CD8-positive, alpha-beta T cell (primary cell): ENCODE measurements at regions of chr3 and their contacts with region 1.

Region 1: GRCh38 chr3:177359593-177360357 is 162.5 kb upstream of the TBL1XR1 start:
- DNase-seq: peak; percentile 94 to 99 (median 96)
- ATAC-seq: peak; percentile 84
- H3K4me3 ChIP-seq: peak overlapping the region; percentile 59 to 93
- H3K4me3 Mint-ChIP-seq: peak overlapping the region; percentile 92
- H3K27ac ChIP-seq: peak overlapping the region; percentile 89 to 99
- H3K27ac Mint-ChIP-seq: peak overlapping the region; percentile 99
- H3K4me1 ChIP-seq: peaks cover 33% of the 10 kb centered on the region
- H3K4me1 Mint-ChIP-seq: peaks cover 49% of the 10 kb centered on the region
- H3K27me3 ChIP-seq: no peaks in the 10 kb centered on the region
- H3K27me3 Mint-ChIP-seq: no peaks in the 10 kb centered on the region
- CTCF ChIP-seq: no peak

Region 2: DNA sequence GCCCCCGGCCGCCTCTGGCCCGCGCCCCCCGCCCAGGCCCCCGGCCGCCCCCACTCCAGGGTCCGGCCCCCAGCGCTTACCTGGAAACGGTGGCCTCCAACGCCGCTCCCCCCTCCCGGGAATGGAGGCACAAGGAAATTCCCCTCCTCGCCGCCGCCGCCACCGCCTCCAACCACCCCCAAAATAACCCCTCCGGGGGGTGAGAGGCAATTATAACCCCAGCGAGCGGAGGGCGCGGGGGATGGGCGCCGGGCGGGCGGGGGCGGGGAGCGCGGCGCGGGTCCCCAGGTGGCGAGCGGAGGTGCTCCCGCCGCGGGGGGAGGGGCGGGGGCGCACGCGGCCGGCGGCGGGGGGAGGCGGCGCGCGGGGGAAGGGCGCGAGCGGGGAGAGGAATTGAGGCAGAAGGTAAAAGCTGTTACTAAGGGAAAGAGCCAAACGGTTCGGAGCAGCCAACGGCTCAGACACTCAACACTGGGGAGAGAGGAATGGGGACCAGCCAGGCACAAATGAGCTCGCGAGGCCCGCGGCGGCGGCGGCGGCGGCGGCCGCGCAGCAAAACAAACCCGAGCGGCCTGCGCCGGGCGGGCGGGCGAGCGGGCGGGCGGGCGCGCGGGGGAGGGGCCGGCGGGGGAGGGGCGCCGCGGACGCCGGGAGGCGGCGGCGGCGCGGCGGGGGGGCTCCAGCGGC is 162.6 kb before region 1 on chr3 and contains the start of gene TBL1XR1:
- CTCF ChIA-PET with region 1: interaction called, 65 read pairs
- POLR2A ChIA-PET with region 1: interaction called, 199 read pairs
- intact Hi-C with region 1: loop called (anchors 1 kb)
- DNase-seq: peak; percentile 78 to 95 (median 86)
- ATAC-seq: peak; percentile 48
- H3K4me3 ChIP-seq: peak within 1 kb of the TSS; percentile 86 to 93
- H3K4me3 Mint-ChIP-seq: peak within 1 kb of the TSS; percentile 99
- H3K27ac ChIP-seq: peak within 1 kb of the TSS; percentile 81 to 85
- H3K27ac Mint-ChIP-seq: peak within 1 kb of the TSS; percentile 99
- H3K4me1 ChIP-seq: peaks cover 56% of the 10 kb centered on the region
- H3K4me1 Mint-ChIP-seq: peaks cover 65% of the 10 kb centered on the region
- H3K27me3 ChIP-seq: no peaks in the 10 kb centered on the region
- H3K27me3 Mint-ChIP-seq: no peaks in the 10 kb centered on the region
- CTCF ChIP-seq: no peak
- total RNA-seq, gene TBL1XR1: 64.8 to 68.4 TPM

Region 3: GRCh38 chr3:177236704-177237103 is 123.1 kb before region 1 on chr3:
- CTCF ChIA-PET with region 1: no interaction called
- POLR2A ChIA-PET with region 1: no interaction called
- intact Hi-C with region 1: no loop called
- DNase-seq: no peak
- ATAC-seq: no peak
- H3K4me3 ChIP-seq: no peak overlapping the region
- H3K4me3 Mint-ChIP-seq: no peak overlapping the region
- H3K27ac ChIP-seq: no peak overlapping the region
- H3K27ac Mint-ChIP-seq: no peak overlapping the region
- H3K4me1 ChIP-seq: no peaks in the 10 kb centered on the region
- H3K4me1 Mint-ChIP-seq: peaks cover 6% of the 10 kb centered on the region
- H3K27me3 ChIP-seq: no peaks in the 10 kb centered on the region
- H3K27me3 Mint-ChIP-seq: no peaks in the 10 kb centered on the region
- CTCF ChIP-seq: no peak

Region 4: GRCh38 chr3:177345049-177345972 is 14.5 kb before region 1 on chr3:
- CTCF ChIA-PET with region 1: interaction called, 3 read pairs
- POLR2A ChIA-PET with region 1: no interaction called
- intact Hi-C with region 1: loop called (anchors 1 to 2 kb)
- DNase-seq: peak in 8 of 9 experiments; percentile 24 to 59 (median 46)
- ATAC-seq: peak; percentile 61
- H3K4me3 ChIP-seq: no peak overlapping the region
- H3K4me3 Mint-ChIP-seq: no peak overlapping the region
- H3K27ac ChIP-seq: no peak overlapping the region
- H3K27ac Mint-ChIP-seq: no peak overlapping the region
- H3K4me1 ChIP-seq: peaks cover 15% of the 10 kb centered on the region
- H3K4me1 Mint-ChIP-seq: peaks cover 15% of the 10 kb centered on the region
- H3K27me3 ChIP-seq: no peaks in the 10 kb centered on the region
- H3K27me3 Mint-ChIP-seq: no peaks in the 10 kb centered on the region
- CTCF ChIP-seq: no peak

Region 5: DNA sequence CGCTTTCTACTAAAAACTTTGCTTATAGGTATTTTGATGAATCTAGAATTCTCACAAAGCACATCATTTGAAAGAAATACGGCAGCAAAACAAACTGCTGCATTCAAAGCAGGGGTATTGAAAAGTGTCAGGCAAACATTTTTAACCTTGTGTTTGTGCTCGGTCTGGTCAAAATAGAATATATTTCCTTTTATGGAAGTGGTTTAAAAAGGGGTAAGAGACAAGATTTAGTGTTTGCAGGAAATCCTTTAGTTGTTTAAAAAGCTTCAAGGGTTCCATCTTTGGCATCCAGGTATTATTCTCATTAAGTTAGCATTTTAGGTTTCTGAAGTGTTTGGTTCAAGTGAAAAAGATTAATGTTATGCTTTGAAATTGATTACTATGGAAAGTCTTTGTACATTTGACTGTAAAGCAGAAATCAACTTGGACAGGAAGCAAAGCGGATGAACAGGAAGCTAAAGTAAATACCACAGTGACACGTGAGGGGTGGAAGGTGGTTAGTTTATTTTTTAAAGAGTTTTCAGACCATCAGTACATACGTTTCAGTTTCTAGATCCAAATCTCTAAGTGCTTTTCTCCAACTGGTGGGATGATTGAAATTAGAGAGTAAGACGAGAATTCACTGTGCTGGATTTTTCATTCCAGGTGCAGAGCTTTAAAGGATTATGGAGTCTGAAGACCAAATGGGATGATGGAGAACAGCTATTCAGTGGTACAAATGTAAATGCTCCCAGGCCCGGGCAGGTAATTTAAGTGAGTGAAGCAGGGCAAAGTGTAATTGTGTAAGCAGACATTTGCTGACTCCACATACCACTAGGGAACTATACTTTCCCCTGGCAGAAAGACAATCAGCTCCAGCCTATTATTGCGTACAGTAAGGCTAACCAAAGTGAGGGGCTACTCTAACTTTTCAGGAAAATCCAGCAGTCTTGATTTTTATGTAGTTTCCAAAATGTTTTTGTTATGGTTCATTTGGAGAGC is 179.3 kb after region 1 on chr3:
- CTCF ChIA-PET with region 1: interaction called, 4 read pairs
- POLR2A ChIA-PET with region 1: interaction called, 6 read pairs
- intact Hi-C with region 1: loop called in 1 of 2 experiments (anchors 1 kb)
- DNase-seq: peak in 3 of 9 experiments; percentile 9 to 67 (median 48)
- ATAC-seq: peak; percentile 49
- H3K4me3 ChIP-seq: peak overlapping the region; percentile 13 to 30
- H3K4me3 Mint-ChIP-seq: peak overlapping the region; percentile 75
- H3K27ac ChIP-seq: peak overlapping the region; percentile 29 to 62
- H3K27ac Mint-ChIP-seq: peak overlapping the region; percentile 86
- H3K4me1 ChIP-seq: peaks cover 28% of the 10 kb centered on the region
- H3K4me1 Mint-ChIP-seq: peaks cover 57% of the 10 kb centered on the region
- H3K27me3 ChIP-seq: no peaks in the 10 kb centered on the region
- H3K27me3 Mint-ChIP-seq: no peaks in the 10 kb centered on the region
- CTCF ChIP-seq: no peak

Region 6: GRCh38 chr3:177640319-177640997 is 280.7 kb after region 1 on chr3:
- CTCF ChIA-PET with region 1: interaction called, 3 read pairs
- POLR2A ChIA-PET with region 1: interaction called, 15 read pairs
- intact Hi-C with region 1: loop called in 1 of 2 experiments (anchors 10 kb)
- DNase-seq: peak in 2 of 9 experiments; percentile 20 to 22
- ATAC-seq: no peak
- H3K4me3 ChIP-seq: no peak overlapping the region
- H3K4me3 Mint-ChIP-seq: no peak overlapping the region
- H3K27ac ChIP-seq: peak overlapping the region in 1 of 2 experiments; percentile 29
- H3K27ac Mint-ChIP-seq: peak overlapping the region; percentile 69
- H3K4me1 ChIP-seq: peaks cover 40% of the 10 kb centered on the region
- H3K4me1 Mint-ChIP-seq: peaks cover 51% of the 10 kb centered on the region
- H3K27me3 ChIP-seq: no peaks in the 10 kb centered on the region
- H3K27me3 Mint-ChIP-seq: no peaks in the 10 kb centered on the region
- CTCF ChIP-seq: no peak

Region 7: GRCh38 chr3:177944228-177944661 is 584.5 kb after region 1 on chr3:
- CTCF ChIA-PET with region 1: no interaction called
- POLR2A ChIA-PET with region 1: no interaction called
- intact Hi-C with region 1: loop called in 1 of 2 experiments (anchors 2 kb)
- DNase-seq: peak in 3 of 9 experiments; percentile 22 to 72 (median 49)
- ATAC-seq: peak; percentile 81
- H3K4me3 ChIP-seq: peak overlapping the region in 1 of 2 experiments; percentile 6
- H3K4me3 Mint-ChIP-seq: peak overlapping the region; percentile 50
- H3K27ac ChIP-seq: peak overlapping the region; percentile 8 to 38
- H3K27ac Mint-ChIP-seq: peak overlapping the region; percentile 83
- H3K4me1 ChIP-seq: peaks cover 29% of the 10 kb centered on the region
- H3K4me1 Mint-ChIP-seq: peaks cover 33% of the 10 kb centered on the region
- H3K27me3 ChIP-seq: no peaks in the 10 kb centered on the region
- H3K27me3 Mint-ChIP-seq: no peaks in the 10 kb centered on the region
- CTCF ChIP-seq: no peak